ENCODE measurements at regions of chr11 and their contacts with region 1.

Region 1: GRCh38 chr11:19679952-19680828 is 32.4 kb upstream of the NAV2 start:
- DNase-seq: peak; percentile 86
- ATAC-seq: peak; percentile 59

Region 2: DNA sequence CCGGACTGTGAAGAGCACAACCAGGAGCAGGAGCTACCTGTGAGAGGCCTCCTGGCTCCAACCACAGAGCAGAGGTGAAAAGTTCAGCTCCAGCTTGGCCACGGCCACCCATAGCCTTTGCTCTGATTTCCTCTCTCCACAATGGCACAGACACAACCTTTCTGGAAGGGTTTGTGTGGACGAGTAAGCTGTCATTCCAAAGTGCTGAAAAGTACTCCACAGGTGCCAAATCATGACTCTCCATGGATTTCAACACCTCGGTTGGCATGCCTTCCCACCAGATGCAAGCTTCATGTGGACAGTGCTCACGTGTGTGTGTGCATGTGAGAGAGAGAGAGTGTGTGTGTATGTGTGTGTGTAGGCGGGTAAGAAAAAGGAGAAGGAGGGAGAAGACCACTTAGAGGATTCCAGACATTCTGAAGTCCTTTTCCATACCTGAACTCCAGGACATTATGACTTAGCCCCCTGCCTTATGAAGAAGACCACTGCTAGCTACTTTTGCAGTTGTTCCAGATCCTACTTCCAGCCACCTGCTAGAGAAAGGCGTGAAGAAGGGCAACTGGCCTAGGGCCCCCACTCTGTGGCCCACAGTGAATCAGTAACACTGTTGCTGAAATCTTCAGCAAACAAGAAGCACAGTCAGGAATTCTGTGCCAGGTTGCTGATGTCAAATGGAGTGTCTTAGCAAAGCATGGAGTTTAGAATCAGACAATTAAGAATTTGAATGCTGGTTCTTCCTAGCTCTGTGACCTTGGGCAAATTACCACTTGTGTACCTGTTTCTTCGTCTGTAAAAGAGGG is 18.5 kb after region 1 on chr11:
- intact Hi-C with region 1: loop called (anchors 2 kb)
- DNase-seq: no peak
- ATAC-seq: peak; percentile 91

Measured in Right ventricle myocardium inferior (tissue), 1 donor.